Transverse colon (tissue), 4 donors: ENCODE measurements at regions of chr7 and their contacts with region 1.

Region 1: GRCh38 chr7:23431702-23432199 is 38.5 kb downstream of the IGF2BP3 start:
- DNase-seq: no peak
- H3K4me3 ChIP-seq: no peak overlapping the region
- H3K27ac ChIP-seq: no peak overlapping the region
- H3K4me1 ChIP-seq: no peaks in the 10 kb centered on the region
- H3K27me3 ChIP-seq: peaks cover 20% of the 10 kb centered on the region
- CTCF ChIP-seq: no peak
- EP300 ChIP-seq: no peak
- POLR2A ChIP-seq: no peak

Region 2: DNA sequence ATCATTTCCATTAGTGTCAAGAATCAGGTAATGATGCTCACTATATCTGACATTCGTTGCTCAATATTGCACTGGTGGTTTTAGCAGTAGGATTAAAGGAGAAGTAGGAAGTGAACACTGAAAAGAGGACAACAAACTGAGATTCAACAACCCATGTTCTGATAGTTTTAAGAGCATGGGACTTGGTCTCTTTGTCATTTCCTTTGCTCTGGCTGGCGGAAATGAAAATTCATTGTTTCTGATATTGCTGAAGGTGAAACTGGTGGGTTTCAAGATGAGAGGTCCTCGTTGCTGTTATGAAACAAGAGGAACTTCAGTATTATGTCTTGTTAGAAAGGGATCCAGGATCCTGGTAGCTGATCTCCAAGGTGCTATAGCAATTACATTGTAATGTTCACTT is 1759.9 kb before region 1 on chr7:
- in situ Hi-C with region 1: no loop called
- intact Hi-C with region 1: loop called (anchors 10 kb)
- DNase-seq: no peak
- H3K4me3 ChIP-seq: no peak overlapping the region
- H3K27ac ChIP-seq: no peak overlapping the region
- H3K4me1 ChIP-seq: no peaks in the 10 kb centered on the region
- H3K27me3 ChIP-seq: no peaks in the 10 kb centered on the region
- CTCF ChIP-seq: no peak
- EP300 ChIP-seq: no peak
- POLR2A ChIP-seq: no peak

Region 3: DNA sequence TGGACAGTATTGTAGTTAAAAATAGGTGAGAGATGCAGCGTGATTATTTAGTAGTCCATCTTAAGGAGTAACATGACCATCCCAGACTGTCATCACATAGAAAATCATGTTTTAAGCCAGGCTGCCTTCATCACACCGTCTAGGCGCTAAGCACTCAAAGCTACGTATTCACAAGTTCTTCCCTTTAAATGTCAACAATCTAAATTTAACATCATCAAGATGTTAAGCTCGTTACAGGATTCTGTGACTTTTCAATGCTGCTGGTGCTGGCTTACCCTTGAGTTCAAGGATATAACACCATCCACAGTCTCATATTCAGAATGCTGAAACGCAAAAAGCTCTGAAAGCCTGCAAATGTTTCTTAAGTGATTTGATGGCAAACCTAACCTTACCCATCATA is 1376.5 kb before region 1 on chr7:
- in situ Hi-C with region 1: no loop called
- intact Hi-C with region 1: loop called (anchors 5 kb)
- DNase-seq: no peak
- H3K4me3 ChIP-seq: no peak overlapping the region
- H3K27ac ChIP-seq: no peak overlapping the region
- H3K4me1 ChIP-seq: no peaks in the 10 kb centered on the region
- H3K27me3 ChIP-seq: no peaks in the 10 kb centered on the region
- CTCF ChIP-seq: no peak
- EP300 ChIP-seq: no peak
- POLR2A ChIP-seq: no peak

Region 4: DNA sequence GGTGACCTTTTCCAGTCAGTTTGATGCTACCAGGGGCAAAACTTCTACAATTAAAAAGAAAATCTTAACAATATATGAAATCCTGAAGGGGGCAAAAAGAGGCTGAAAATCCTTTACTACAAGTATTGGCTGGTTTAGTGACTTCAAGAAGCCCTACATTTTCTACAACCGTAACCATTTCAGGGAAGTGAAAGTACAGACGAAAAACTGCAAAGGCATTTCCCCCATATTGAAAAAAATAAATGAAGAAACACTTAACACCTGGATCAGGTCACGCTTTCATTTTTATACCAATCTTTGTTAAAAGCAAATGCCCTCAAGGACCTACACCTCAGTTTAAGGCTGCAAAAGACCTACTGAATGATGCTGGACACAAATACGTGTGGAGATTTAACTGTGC is 666.1 kb before region 1 on chr7:
- in situ Hi-C with region 1: no loop called
- intact Hi-C with region 1: no loop called
- DNase-seq: no peak
- H3K4me3 ChIP-seq: no peak overlapping the region
- H3K27ac ChIP-seq: no peak overlapping the region
- H3K4me1 ChIP-seq: no peaks in the 10 kb centered on the region
- H3K27me3 ChIP-seq: no peaks in the 10 kb centered on the region
- CTCF ChIP-seq: no peak
- EP300 ChIP-seq: no peak
- POLR2A ChIP-seq: no peak

Region 5: DNA sequence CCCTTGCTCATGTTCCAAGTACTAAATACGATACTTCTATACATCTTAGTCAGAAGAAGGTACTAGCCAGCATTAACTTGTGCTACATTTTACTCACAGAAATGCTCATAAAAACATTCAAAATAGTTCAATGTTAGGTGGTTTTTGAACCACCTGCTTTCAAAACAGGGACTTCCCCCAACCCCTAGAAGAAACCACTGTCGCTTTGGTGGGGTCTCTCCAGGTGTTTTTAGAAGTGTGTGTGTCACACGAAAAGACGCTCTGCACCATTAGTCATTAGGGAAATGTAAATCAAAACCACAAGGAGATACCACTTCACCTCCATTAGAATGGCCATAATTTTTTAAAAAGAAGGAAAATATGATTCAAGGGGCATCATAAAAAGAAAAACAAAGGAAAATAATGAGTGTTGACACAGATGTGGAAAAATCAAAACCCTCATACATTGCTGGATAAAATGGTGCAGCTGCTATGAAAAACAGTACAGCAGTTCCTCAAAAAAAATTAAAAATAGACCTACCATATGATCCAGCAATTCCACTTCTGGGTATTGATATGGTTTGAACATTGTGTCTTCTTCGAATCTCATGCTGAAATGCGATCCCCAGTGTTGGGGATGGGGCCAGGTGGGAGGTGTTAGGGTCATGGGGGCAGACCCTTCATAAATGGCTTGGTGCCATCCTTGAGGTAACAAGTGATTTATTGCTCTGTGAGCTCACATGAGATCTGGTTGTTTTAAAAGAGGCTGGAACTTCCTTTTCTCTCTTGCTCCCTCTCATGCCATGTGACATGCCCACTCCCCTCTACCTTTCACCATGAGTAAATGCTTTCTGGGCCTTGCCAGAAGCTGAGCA is 58.4 kb before region 1 on chr7:
- in situ Hi-C with region 1: no loop called
- intact Hi-C with region 1: no loop called
- DNase-seq: no peak
- H3K4me3 ChIP-seq: no peak overlapping the region
- H3K27ac ChIP-seq: no peak overlapping the region
- H3K4me1 ChIP-seq: no peaks in the 10 kb centered on the region
- H3K27me3 ChIP-seq: no peaks in the 10 kb centered on the region
- CTCF ChIP-seq: no peak
- EP300 ChIP-seq: no peak
- POLR2A ChIP-seq: no peak